MCF 10A (cell line): ENCODE measurements at regions of chr13 and their contacts with region 1.

Region 1: DNA sequence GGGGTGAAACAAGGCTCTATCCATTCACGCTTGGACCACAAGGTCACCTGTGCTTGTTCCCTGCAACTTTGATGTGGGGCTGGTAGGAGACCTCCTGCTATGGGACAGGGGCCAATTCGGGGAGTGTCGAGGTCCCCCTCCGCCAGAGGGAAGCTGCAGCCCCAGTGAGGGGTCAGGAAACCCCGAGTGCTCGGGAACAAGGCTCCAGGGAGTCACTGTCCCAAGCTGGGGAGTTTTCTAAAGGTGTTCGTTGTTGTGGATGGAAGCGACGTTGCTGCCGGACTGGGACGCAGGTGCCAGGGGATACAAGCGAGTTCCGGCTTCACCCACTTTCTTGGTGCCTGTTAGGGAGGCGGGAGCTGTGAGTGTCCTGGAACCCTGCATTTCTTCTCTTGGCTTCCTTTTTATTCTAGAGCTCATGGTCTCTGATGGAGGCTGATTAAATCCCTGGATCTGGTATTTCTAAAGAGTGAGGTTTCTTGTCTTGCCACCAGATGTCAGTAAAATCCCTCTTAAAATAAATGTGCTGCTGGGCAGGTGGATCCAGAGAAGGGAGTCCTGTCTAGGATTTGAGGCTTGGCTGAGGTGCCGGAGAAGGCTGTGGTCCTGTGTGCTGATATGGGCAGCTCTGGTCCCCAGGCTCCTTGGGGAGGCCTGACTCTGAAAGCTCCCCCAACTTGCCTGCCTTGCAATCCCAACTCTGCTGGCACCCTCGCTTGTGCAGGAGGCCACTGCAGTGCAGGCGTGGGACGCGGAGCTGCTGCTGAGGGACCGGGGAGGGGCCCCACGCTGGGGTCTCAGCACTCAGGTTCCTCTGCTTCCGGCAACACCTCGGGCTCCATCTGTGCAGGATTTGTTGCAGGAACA is 153.9 kb downstream of the TEX29 start:
- DNase-seq: peak; percentile 52
- H3K4me3 Mint-ChIP-seq: no peak overlapping the region
- H3K27ac Mint-ChIP-seq: no peak overlapping the region
- H3K4me1 Mint-ChIP-seq: no peaks in the 10 kb centered on the region
- H3K27me3 Mint-ChIP-seq: peaks cover 13% of the 10 kb centered on the region
- CTCF ChIP-seq: peak; percentile 38

Region 2: GRCh38 chr13:111359237-111359915 is 115.0 kb before region 1 on chr13:
- CTCF ChIA-PET with region 1: no interaction called
- POLR2A ChIA-PET with region 1: no interaction called
- intact Hi-C with region 1: no loop called
- DNase-seq: no peak
- H3K4me3 Mint-ChIP-seq: no peak overlapping the region
- H3K27ac Mint-ChIP-seq: no peak overlapping the region
- H3K4me1 Mint-ChIP-seq: no peaks in the 10 kb centered on the region
- H3K27me3 Mint-ChIP-seq: peaks cover 25% of the 10 kb centered on the region
- CTCF ChIP-seq: no peak

Region 3: DNA sequence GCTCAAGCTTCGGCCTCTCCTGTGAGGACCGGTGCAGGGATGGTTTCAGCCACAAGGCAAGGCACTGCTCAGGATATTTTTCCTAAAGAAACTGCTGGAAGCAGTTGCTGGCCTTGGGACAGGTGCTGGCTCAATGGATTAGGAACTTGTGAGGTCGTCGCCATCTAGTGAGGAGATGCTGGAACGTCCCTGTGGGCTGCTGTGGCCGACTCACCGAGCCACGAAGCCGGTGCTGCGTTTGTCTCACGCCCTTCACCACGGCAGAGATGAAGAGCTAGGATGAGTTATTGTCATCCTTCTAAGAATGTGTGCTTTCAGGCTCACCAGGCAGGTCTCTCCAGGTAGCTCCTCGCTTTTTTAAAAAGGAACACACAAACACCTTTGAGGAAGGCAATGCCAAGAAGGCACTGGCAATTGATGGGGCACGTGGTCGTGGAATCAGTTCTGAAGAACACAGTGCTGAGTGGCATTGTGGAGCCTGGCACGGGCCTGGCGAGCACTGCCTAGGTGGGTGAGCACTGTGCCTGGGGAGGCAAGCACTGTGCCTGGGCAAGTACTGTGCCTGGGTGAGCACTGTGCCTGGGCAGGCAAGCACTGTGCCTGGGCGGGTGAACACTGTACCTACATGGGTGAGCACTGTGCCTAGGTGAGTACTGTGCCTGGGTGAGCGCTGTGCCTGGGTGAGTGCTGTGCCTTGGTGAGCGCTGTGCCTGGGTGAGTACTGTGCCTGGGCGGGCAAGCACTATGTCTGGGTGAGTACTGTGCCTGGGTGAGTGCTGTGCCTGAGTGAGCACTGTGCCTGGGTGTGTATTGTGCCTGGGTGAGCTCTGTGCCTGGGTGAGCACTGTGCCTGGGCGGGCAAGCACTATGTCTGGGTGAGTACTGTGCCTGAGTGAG is 13.6 kb before region 1 on chr13:
- CTCF ChIA-PET with region 1: interaction called, 19 read pairs
- POLR2A ChIA-PET with region 1: no interaction called
- intact Hi-C with region 1: no loop called
- DNase-seq: peak; percentile 40
- H3K4me3 Mint-ChIP-seq: no peak overlapping the region
- H3K27ac Mint-ChIP-seq: no peak overlapping the region
- H3K4me1 Mint-ChIP-seq: no peaks in the 10 kb centered on the region
- H3K27me3 Mint-ChIP-seq: no peaks in the 10 kb centered on the region
- CTCF ChIP-seq: no peak

Region 4: GRCh38 chr13:112443995-112444860 is 969.9 kb after region 1 on chr13:
- CTCF ChIA-PET with region 1: interaction called, 161 read pairs
- POLR2A ChIA-PET with region 1: no interaction called
- intact Hi-C with region 1: no loop called
- DNase-seq: peak; percentile 50
- H3K4me3 Mint-ChIP-seq: no peak overlapping the region
- H3K27ac Mint-ChIP-seq: no peak overlapping the region
- H3K4me1 Mint-ChIP-seq: no peaks in the 10 kb centered on the region
- H3K27me3 Mint-ChIP-seq: no peaks in the 10 kb centered on the region
- CTCF ChIP-seq: peak; percentile 89

Region 5: GRCh38 chr13:112510002-112510780 is 1035.8 kb after region 1 on chr13:
- CTCF ChIA-PET with region 1: interaction called, 7 read pairs
- POLR2A ChIA-PET with region 1: no interaction called
- intact Hi-C with region 1: loop called (anchors 1 kb)
- DNase-seq: peak; percentile 53
- H3K4me3 Mint-ChIP-seq: no peak overlapping the region
- H3K27ac Mint-ChIP-seq: peak overlapping the region; percentile 25
- H3K4me1 Mint-ChIP-seq: no peaks in the 10 kb centered on the region
- H3K27me3 Mint-ChIP-seq: no peaks in the 10 kb centered on the region
- CTCF ChIP-seq: peak; percentile 52

Region 6: GRCh38 chr13:112873851-112874750 is 1399.7 kb after region 1 on chr13:
- CTCF ChIA-PET with region 1: interaction called, 5 read pairs
- POLR2A ChIA-PET with region 1: no interaction called
- intact Hi-C with region 1: loop called (anchors 10 kb)
- DNase-seq: peak; percentile 70
- H3K4me3 Mint-ChIP-seq: no peak overlapping the region
- H3K27ac Mint-ChIP-seq: no peak overlapping the region
- H3K4me1 Mint-ChIP-seq: peaks cover 10% of the 10 kb centered on the region
- H3K27me3 Mint-ChIP-seq: no peaks in the 10 kb centered on the region
- CTCF ChIP-seq: peak; percentile 88